CD8-positive, alpha-beta memory T cell (primary cell): ENCODE measurements at regions of chr9 and their contacts with region 1.

Region 1: DNA sequence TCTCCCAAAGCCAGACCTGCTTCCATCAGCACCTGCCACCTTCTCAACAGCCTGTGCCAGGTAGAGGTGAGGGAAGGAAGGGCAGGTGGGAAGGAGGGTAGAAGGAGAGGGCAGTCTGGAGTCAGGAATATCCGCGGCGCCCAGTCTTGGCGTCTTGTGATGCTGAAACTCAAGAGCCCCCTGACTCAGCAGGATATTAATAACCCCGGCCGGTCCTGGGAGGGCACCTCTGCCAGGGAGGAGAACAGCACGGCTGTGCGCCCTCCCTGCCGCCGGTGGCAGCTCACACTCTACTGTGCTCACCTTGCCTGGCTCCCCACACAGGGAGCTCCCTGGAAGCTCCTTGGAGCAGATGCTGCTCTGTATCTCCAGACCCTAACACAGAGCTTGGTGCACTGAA is 11.6 kb upstream of the NTNG2 start:
- DNase-seq: no peak
- H3K4me3 ChIP-seq: no peak overlapping the region
- H3K4me3 Mint-ChIP-seq: no peak overlapping the region
- H3K27ac ChIP-seq: no peak overlapping the region
- H3K27ac Mint-ChIP-seq: no peak overlapping the region
- H3K4me1 ChIP-seq: no peaks in the 10 kb centered on the region
- H3K4me1 Mint-ChIP-seq: no peaks in the 10 kb centered on the region
- H3K27me3 ChIP-seq: peaks cover 17% of the 10 kb centered on the region
- H3K27me3 Mint-ChIP-seq: peaks cover 19 to 51% of the 10 kb centered on the region in 2 donors

Region 2: DNA sequence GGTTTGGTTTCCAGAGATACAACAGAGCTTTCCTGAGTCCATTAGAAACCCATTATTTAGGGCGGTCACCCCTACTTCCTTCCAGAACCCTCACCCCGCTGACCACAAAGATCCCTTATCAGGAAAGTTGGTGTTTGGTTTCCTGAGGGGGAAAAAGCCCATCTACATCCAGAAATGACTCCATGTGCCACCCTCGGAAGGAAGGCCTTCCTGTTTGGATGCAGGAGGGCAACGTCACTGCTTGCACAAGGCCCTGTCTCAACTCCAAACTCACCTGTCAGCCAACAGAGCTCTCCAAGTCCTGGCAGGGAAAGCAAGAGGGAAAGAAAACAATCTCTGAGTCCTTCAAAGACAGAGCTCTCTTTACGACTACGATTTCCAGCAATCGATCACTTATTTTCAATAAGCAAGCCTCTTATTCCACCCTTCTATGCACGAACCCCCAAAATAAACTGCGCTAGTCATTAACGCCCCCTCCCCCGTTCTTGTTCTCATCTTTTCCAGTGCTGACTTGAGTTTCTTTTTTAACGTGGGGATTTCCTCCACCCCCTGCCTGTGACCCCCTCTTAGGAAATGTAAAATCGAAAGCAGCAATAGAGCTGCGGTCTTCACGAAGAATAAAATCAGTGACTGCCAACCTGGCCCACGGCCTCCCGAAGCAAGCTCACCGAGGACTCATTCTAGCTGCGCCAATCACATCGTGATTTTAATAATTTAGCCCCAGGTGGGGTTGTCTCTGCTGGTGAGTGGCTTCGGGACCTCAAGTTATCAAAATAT is 24.1 kb before region 1 on chr9:
- CTCF ChIA-PET with region 1: no interaction called
- POLR2A ChIA-PET with region 1: interaction called, 11 read pairs
- DNase-seq: no peak
- H3K4me3 ChIP-seq: no peak overlapping the region
- H3K4me3 Mint-ChIP-seq: peak overlapping the region; percentile 8 to 87 (median 83)
- H3K27ac ChIP-seq: no peak overlapping the region
- H3K27ac Mint-ChIP-seq: peak overlapping the region in 6 of 8 donors; percentile 11 to 48 (median 30)
- H3K4me1 ChIP-seq: no peaks in the 10 kb centered on the region
- H3K4me1 Mint-ChIP-seq: peaks cover 8 to 15% (median 15%) of the 10 kb centered on the region in 3 donors
- H3K27me3 ChIP-seq: no peaks in the 10 kb centered on the region
- H3K27me3 Mint-ChIP-seq: peaks cover 42 to 78% of the 10 kb centered on the region in 2 donors